HepG2 (cell line): ENCODE measurements at regions of chrX and their contacts with region 1.

Region 1: DNA sequence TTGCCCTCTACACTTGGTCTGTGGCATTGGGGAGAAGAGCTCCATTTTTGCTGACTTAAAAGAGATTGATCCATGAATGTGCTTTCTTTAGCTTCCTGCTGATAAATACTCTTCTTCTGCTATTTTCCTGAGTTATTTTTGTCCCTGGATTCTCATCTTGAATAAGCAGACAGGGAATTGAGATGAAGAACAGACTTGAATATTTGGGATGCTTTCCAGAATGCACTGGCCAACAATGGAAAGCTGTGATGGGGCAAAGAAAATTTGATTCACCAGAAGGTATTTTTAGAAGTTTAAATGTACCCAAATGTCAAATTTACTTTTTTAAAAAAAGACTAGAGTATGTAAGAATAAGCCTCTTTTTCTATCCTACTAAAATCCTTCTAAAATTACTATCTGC is 309.9 kb upstream of the PPP1R2C start:
- DNase-seq: no peak
- ATAC-seq: no peak
- H3K4me3 ChIP-seq: no peak overlapping the region
- H3K27ac ChIP-seq: no peak overlapping the region
- H3K4me1 ChIP-seq: no peaks in the 10 kb centered on the region
- H3K27me3 ChIP-seq: no peaks in the 10 kb centered on the region
- CTCF ChIP-seq: no peak
- EP300 ChIP-seq: no peak
- POLR2A ChIP-seq: no peak
- RAD21 ChIP-seq: no peak

Region 2: GRCh38 chrX:42269182-42269581 is 818.6 kb before region 1 on chrX:
- CTCF ChIA-PET with region 1: no interaction called
- POLR2A ChIA-PET with region 1: no interaction called
- in situ Hi-C with region 1: no loop called
- intact Hi-C with region 1: no loop called
- DNase-seq: no peak
- ATAC-seq: no peak
- H3K4me3 ChIP-seq: no peak overlapping the region
- H3K27ac ChIP-seq: no peak overlapping the region
- H3K4me1 ChIP-seq: no peaks in the 10 kb centered on the region
- H3K27me3 ChIP-seq: no peaks in the 10 kb centered on the region
- CTCF ChIP-seq: no peak
- EP300 ChIP-seq: no peak
- POLR2A ChIP-seq: no peak
- RAD21 ChIP-seq: no peak

Region 3: DNA sequence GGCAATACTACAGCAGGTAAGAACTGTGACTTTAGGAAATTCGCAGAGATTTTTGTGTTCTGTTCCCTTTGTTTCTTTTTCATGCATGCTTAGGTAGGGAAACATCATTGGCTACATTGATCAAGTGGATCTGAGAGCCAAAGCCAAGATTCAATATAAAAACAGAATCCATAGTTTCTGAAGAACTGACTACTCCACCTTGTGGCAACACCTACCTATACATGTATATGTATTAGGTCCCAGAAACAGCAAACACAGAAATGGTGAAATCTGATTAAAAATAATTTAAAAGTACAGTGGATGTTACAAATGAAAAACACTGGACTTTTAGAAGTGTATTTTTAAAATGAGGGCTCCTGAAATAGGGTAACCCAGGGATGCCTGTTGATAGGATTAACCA is 245.7 kb after region 1 on chrX:
- CTCF ChIA-PET with region 1: no interaction called
- POLR2A ChIA-PET with region 1: no interaction called
- in situ Hi-C with region 1: no loop called
- intact Hi-C with region 1: loop called (anchors 2 kb)
- DNase-seq: peak; percentile 3
- ATAC-seq: no peak
- H3K4me3 ChIP-seq: no peak overlapping the region
- H3K27ac ChIP-seq: no peak overlapping the region
- H3K4me1 ChIP-seq: no peaks in the 10 kb centered on the region
- H3K27me3 ChIP-seq: no peaks in the 10 kb centered on the region
- CTCF ChIP-seq: peak; percentile 27; the same call in 1 of the 2 replicates
- EP300 ChIP-seq: no peak
- POLR2A ChIP-seq: no peak
- RAD21 ChIP-seq: no peak